ENCODE measurements at regions of chr4 and their contacts with region 1.

Region 1: GRCh38 chr4:108834835-108835384 is 72.1 kb upstream of the ETNPPL start:
- DNase-seq: no peak
- H3K4me3 ChIP-seq: no peak overlapping the region
- H3K27ac ChIP-seq: no peak overlapping the region
- H3K4me1 ChIP-seq: no peaks in the 10 kb centered on the region
- H3K27me3 ChIP-seq: no peaks in the 10 kb centered on the region
- CTCF ChIP-seq: peak; percentile 12 to 53 (median 32)

Region 2: GRCh38 chr4:108783665-108784463 is 51.0 kb before region 1 on chr4:
- intact Hi-C with region 1: no loop called
- DNase-seq: no peak
- H3K4me3 ChIP-seq: no peak overlapping the region
- H3K27ac ChIP-seq: no peak overlapping the region
- H3K4me1 ChIP-seq: no peaks in the 10 kb centered on the region
- H3K27me3 ChIP-seq: no peaks in the 10 kb centered on the region
- CTCF ChIP-seq: no peak

Region 3: GRCh38 chr4:108917255-108917654 is 82.3 kb after region 1 on chr4:
- intact Hi-C with region 1: no loop called
- DNase-seq: no peak
- H3K4me3 ChIP-seq: no peak overlapping the region
- H3K27ac ChIP-seq: no peak overlapping the region
- H3K4me1 ChIP-seq: no peaks in the 10 kb centered on the region
- H3K27me3 ChIP-seq: no peaks in the 10 kb centered on the region
- CTCF ChIP-seq: no peak

Region 4: GRCh38 chr4:109302361-109303139 is 467.6 kb after region 1 on chr4 and contains the start of gene COL25A1:
- intact Hi-C with region 1: loop called (anchors 10 kb)
- DNase-seq: peak; percentile 12 to 76
- H3K4me3 ChIP-seq: peak within 1 kb of the TSS; percentile 67 to 68
- H3K27ac ChIP-seq: peak within 1 kb of the TSS; percentile 15 to 46
- H3K4me1 ChIP-seq: peaks cover 0 to 8% of the 10 kb centered on the region in 2 donors
- H3K27me3 ChIP-seq: no peaks in the 10 kb centered on the region
- CTCF ChIP-seq: no peak
- total RNA-seq, gene COL25A1: 5.6 TPM

Region 5: DNA sequence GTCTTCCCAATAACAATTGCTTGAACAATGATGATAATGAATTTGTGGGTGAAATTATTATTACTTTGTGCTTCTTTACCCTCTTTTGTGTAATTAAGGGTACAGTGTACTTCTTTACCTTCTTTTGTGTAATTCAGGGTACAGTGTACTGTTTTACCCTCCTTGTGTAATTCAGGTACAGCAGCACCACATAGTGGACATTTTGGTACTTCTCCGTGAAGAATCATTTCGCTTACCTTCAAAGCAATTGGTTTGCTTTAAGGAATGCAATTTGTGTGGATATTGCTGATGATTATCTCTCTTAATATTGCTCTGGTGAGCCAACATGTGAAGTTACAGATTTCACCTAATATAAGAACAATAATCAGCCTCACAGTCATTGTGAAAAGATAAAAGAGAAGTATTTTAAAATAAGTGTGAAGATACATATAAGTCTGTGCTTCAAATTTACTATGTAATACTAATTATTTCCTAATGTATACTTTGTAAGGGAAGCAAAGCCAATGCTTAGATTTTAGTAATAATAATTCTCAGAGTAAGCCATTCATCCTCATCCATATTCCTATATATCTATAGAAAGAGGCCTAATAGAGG is 571.5 kb after region 1 on chr4:
- intact Hi-C with region 1: loop called (anchors 5 kb)
- DNase-seq: no peak
- H3K4me3 ChIP-seq: no peak overlapping the region
- H3K27ac ChIP-seq: no peak overlapping the region
- H3K4me1 ChIP-seq: no peaks in the 10 kb centered on the region
- H3K27me3 ChIP-seq: no peaks in the 10 kb centered on the region
- CTCF ChIP-seq: peak; percentile 51 to 63 (median 61)